CD4-positive, alpha-beta T cell (primary cell): ENCODE measurements at regions of chr5 and their contacts with region 1.

Region 1: GRCh38 chr5:36089989-36090564 is 23.4 kb upstream of the UGT3A2 start:
- DNase-seq: peak in 3 of 14 experiments; percentile 2 to 16 (median 10)
- ATAC-seq: no peak
- H3K4me3 ChIP-seq: no peak overlapping the region
- H3K4me3 Mint-ChIP-seq: no peak overlapping the region
- H3K27ac ChIP-seq: no peak overlapping the region
- H3K27ac Mint-ChIP-seq: no peak overlapping the region
- H3K4me1 ChIP-seq: no peaks in the 10 kb centered on the region
- H3K4me1 Mint-ChIP-seq: no peaks in the 10 kb centered on the region
- H3K27me3 ChIP-seq: peaks cover 0 to 5% of the 10 kb centered on the region in 2 experiments
- H3K27me3 Mint-ChIP-seq: peaks cover 17% of the 10 kb centered on the region
- CTCF ChIP-seq: no peak

Region 2: GRCh38 chr5:36690041-36690961 is 600.2 kb after region 1 on chr5:
- CTCF ChIA-PET with region 1: no interaction called
- POLR2A ChIA-PET with region 1: no interaction called
- intact Hi-C with region 1: loop called in 1 of 2 experiments (anchors 10 kb)
- DNase-seq: peak; percentile 39 to 79 (median 50)
- ATAC-seq: peak; percentile 90
- H3K4me3 ChIP-seq: peak overlapping the region; percentile 50
- H3K4me3 Mint-ChIP-seq: peak overlapping the region; percentile 87
- H3K27ac ChIP-seq: no peak overlapping the region
- H3K27ac Mint-ChIP-seq: no peak overlapping the region
- H3K4me1 ChIP-seq: peaks cover 14% of the 10 kb centered on the region
- H3K4me1 Mint-ChIP-seq: peaks cover 12% of the 10 kb centered on the region
- H3K27me3 ChIP-seq: peaks cover 9 to 14% of the 10 kb centered on the region in 2 experiments
- H3K27me3 Mint-ChIP-seq: peaks cover 50% of the 10 kb centered on the region
- CTCF ChIP-seq: peak; percentile 76